ENCODE measurements at regions of chr3 and their contacts with region 1.

Region 1: DNA sequence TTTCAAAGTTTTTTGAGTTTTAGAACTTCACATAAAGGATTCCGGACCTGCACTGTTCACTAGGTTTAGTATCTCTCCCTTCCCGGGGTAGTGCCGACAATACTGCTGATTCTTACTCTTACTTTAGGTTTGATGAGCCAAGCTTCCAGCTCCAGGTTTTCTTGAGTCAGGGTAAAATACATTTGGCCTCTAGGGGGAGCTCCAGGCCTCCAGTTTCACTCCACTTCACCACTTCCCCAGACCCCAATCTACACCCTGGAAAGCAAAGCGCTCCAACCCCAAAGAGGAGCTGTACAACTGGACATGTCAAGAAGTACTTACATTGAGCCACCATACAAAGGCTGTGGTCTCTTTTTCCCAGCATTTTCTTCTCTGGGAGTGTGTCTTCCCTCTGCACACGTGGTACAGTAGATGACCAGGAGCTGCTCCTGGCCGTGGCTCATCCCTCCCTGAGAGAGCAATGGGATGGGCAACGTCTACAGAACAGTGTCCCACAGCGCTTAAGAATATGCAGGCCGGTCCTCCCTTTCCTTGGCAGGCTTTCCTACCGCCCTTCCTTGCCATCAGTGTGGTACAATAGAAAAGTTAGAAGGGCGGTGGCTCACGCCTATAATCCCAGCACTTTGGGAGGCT is 93.9 kb upstream of the CCDC80 start:
- DNase-seq: no peak
- H3K4me3 ChIP-seq: no peak overlapping the region
- H3K27me3 ChIP-seq: no peaks in the 10 kb centered on the region
- CTCF ChIP-seq: peak; percentile 77

Region 2: DNA sequence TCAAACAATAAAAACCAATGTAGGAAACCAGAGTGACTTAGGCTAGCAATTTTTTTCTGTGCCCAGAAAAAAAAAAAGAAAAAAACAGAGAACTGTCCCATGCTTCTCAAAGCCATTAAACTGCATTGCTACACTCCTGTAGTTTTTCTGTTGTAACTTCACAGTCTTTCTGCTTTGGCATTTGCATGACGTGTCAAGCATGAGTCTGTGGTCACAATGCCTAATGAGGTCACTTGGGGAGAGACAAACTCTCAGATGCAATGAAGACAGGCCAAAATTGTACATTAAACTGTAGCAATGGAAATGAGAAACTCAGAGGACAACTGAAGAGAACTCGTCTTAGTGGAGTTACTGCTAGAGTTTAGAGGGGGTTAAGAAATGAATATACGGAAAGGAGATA is 124.7 kb before region 1 on chr3:
- CTCF ChIA-PET with region 1: no interaction called
- POLR2A ChIA-PET with region 1: no interaction called
- DNase-seq: no peak
- H3K4me3 ChIP-seq: no peak overlapping the region
- H3K27me3 ChIP-seq: no peaks in the 10 kb centered on the region
- CTCF ChIP-seq: no peak

Region 3: DNA sequence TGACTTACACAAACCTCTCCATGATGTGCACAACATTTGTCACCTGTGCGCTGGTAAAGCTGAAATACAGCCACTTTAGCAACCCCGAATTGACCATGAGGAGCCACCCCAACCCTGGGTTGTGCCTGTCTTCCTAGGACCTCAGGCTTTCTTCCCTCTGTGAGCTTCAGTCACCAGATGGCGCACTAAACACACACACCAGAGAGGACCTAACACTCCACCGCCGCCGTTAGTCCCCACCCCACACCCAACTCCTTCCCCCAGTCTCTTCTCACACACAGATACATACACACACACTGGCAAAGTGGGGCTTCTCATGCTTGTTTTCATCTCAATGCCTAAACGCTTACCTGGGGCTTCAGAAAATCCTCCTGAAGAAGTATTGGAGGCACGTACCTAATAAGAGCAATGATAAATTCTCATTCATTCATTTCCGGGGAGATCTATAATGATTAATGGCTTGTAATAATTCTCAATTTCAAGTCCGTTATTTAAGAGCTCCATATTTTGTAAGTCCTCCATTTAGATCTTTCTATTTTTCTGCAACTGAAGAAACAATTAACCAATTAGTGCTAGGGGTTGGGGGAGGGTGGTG is 91.8 kb before region 1 on chr3:
- CTCF ChIA-PET with region 1: interaction called, 75 read pairs
- POLR2A ChIA-PET with region 1: interaction called, 7 read pairs
- DNase-seq: no peak
- H3K4me3 ChIP-seq: no peak overlapping the region
- H3K27me3 ChIP-seq: no peaks in the 10 kb centered on the region
- CTCF ChIP-seq: peak; percentile 90

Region 4: GRCh38 chr3:112709911-112710310 is 24.9 kb before region 1 on chr3:
- CTCF ChIA-PET with region 1: interaction called, 23 read pairs
- POLR2A ChIA-PET with region 1: no interaction called
- DNase-seq: no peak
- H3K4me3 ChIP-seq: no peak overlapping the region
- H3K27me3 ChIP-seq: no peaks in the 10 kb centered on the region
- CTCF ChIP-seq: no peak

Region 5: GRCh38 chr3:112751564-112752512 is 17.0 kb after region 1 on chr3:
- CTCF ChIA-PET with region 1: interaction called, 29 read pairs
- POLR2A ChIA-PET with region 1: no interaction called
- DNase-seq: no peak
- H3K4me3 ChIP-seq: no peak overlapping the region
- H3K27me3 ChIP-seq: no peaks in the 10 kb centered on the region
- CTCF ChIP-seq: no peak

Region 6: GRCh38 chr3:112807685-112808084 is 72.9 kb after region 1 on chr3:
- CTCF ChIA-PET with region 1: interaction called, 137 read pairs
- POLR2A ChIA-PET with region 1: interaction called, 3 read pairs
- DNase-seq: no peak
- H3K4me3 ChIP-seq: no peak overlapping the region
- H3K27me3 ChIP-seq: no peaks in the 10 kb centered on the region
- CTCF ChIP-seq: no peak

Region 7: GRCh38 chr3:112979240-112979832 is 244.5 kb after region 1 on chr3:
- CTCF ChIA-PET with region 1: interaction called, 19 read pairs
- POLR2A ChIA-PET with region 1: no interaction called
- DNase-seq: no peak
- H3K4me3 ChIP-seq: no peak overlapping the region
- H3K27me3 ChIP-seq: no peaks in the 10 kb centered on the region
- CTCF ChIP-seq: peak; percentile 60